Endothelial cell of umbilical vein (primary cell): ENCODE measurements at regions of chr3 and their contacts with region 1.

Region 1: DNA sequence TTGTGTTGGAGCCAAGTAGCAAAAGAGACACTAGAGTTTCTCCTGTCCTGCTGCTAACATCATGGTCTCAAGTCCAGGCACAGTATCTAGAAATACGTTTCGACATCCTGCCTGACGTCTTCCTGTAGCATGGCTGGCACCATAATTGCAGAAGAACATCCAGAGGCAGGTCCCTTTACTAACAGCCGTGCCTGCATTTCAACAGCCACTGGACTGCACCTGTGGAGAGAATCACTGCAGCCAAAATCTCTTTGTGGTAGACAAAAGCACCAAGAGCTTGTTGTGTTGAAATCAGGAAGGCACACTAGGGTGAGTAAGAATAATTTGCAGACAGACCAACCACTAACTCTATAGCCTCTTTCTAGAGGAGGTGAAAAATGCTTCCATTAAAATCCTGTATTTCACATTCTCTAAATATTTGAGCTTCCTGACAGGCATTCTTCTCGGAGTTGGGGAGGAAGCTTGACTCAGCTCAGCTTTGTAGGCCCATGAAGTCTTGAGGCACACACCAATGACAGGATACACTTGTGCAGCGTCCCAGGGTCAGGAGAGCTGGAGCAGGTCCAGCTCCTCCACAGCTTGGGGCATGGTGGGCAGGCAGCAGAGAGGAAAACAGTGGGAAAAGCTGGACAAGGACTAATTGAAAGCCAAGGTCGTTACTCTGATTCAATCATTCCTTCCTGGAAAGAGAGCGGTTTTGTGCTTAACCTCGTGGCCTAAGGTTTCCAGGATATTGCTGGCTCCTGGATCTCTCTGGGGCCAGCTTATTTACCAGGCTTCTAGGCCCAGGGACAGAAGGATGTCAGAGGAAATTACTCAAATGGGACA is 244.9 kb downstream of the FAM43A start:
- DNase-seq: peak; percentile 99
- H3K4me3 ChIP-seq: no peak overlapping the region
- H3K27ac ChIP-seq: peak overlapping the region; percentile 98
- H3K4me1 ChIP-seq: peaks cover 47% of the 10 kb centered on the region
- H3K27me3 ChIP-seq: no peaks in the 10 kb centered on the region
- CTCF ChIP-seq: no peak
- POLR2A ChIP-seq: peak; percentile 41

Region 2: GRCh38 chr3:193910886-193911738 is 1019.5 kb before region 1 on chr3:
- CTCF ChIA-PET with region 1: no interaction called
- POLR2A ChIA-PET with region 1: no interaction called
- dilution Hi-C with region 1: no loop called
- intact Hi-C with region 1: no loop called
- DNase-seq: no peak
- H3K4me3 ChIP-seq: no peak overlapping the region
- H3K27ac ChIP-seq: no peak overlapping the region
- H3K4me1 ChIP-seq: peaks cover 7% of the 10 kb centered on the region
- H3K27me3 ChIP-seq: no peaks in the 10 kb centered on the region
- CTCF ChIP-seq: no peak
- POLR2A ChIP-seq: no peak

Region 3: GRCh38 chr3:194711913-194712312 is 218.7 kb before region 1 on chr3:
- CTCF ChIA-PET with region 1: interaction called, 3 read pairs
- POLR2A ChIA-PET with region 1: no interaction called
- dilution Hi-C with region 1: no loop called
- intact Hi-C with region 1: loop called (anchors 1 kb)
- DNase-seq: peak; percentile 97
- H3K4me3 ChIP-seq: no peak overlapping the region
- H3K27ac ChIP-seq: peak overlapping the region; percentile 73
- H3K4me1 ChIP-seq: peaks cover 28% of the 10 kb centered on the region
- H3K27me3 ChIP-seq: no peaks in the 10 kb centered on the region
- CTCF ChIP-seq: no peak
- POLR2A ChIP-seq: no peak

Region 4: GRCh38 chr3:194849166-194849875 is 81.3 kb before region 1 on chr3:
- CTCF ChIA-PET with region 1: no interaction called
- POLR2A ChIA-PET with region 1: no interaction called
- dilution Hi-C with region 1: no loop called
- intact Hi-C with region 1: no loop called
- DNase-seq: no peak
- H3K4me3 ChIP-seq: no peak overlapping the region
- H3K27ac ChIP-seq: no peak overlapping the region
- H3K4me1 ChIP-seq: no peaks in the 10 kb centered on the region
- H3K27me3 ChIP-seq: no peaks in the 10 kb centered on the region
- CTCF ChIP-seq: no peak
- POLR2A ChIP-seq: no peak

Region 5: GRCh38 chr3:194871143-194871863 is 59.3 kb before region 1 on chr3:
- CTCF ChIA-PET with region 1: interaction called, 9 read pairs
- POLR2A ChIA-PET with region 1: interaction called, 5 read pairs
- dilution Hi-C with region 1: no loop called
- intact Hi-C with region 1: loop called (anchors 1 kb)
- DNase-seq: peak; percentile 71
- H3K4me3 ChIP-seq: no peak overlapping the region
- H3K27ac ChIP-seq: peak overlapping the region; percentile 73
- H3K4me1 ChIP-seq: peaks cover 50% of the 10 kb centered on the region
- H3K27me3 ChIP-seq: no peaks in the 10 kb centered on the region
- CTCF ChIP-seq: no peak
- POLR2A ChIP-seq: no peak

Region 6: DNA sequence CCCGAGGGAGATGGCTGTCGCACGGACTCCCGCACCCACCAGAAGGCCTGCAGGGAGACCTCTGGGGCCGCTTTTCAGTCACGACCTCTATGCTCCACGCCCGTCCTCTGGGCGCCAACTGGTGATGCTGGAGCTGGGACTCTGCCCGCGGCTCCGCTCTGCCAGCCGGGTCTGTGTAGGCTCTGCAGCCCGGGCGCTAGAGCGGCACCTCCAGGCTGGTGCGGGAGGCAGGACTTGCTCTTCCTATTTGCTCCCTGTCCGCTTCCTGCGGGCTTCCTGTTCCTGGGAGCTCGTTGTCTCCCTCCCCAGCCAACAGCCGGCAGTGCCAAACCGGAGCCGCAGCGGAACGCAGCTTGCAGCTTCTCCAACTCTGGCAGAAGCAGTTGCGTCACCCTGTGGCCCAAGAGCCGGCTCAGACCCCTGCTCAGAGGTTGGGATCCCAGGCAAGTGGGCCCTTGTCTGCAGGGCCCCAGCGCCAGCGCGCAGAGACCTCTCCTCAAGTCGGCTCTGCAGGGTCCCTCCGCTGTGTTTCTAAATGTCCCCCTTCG is 54.5 kb after region 1 on chr3:
- CTCF ChIA-PET with region 1: interaction called, 4 read pairs
- POLR2A ChIA-PET with region 1: no interaction called
- dilution Hi-C with region 1: no loop called
- intact Hi-C with region 1: loop called (anchors 2 kb)
- DNase-seq: no peak
- H3K4me3 ChIP-seq: no peak overlapping the region
- H3K27ac ChIP-seq: no peak overlapping the region
- H3K4me1 ChIP-seq: no peaks in the 10 kb centered on the region
- H3K27me3 ChIP-seq: no peaks in the 10 kb centered on the region
- CTCF ChIP-seq: no peak
- POLR2A ChIP-seq: no peak

Region 7: DNA sequence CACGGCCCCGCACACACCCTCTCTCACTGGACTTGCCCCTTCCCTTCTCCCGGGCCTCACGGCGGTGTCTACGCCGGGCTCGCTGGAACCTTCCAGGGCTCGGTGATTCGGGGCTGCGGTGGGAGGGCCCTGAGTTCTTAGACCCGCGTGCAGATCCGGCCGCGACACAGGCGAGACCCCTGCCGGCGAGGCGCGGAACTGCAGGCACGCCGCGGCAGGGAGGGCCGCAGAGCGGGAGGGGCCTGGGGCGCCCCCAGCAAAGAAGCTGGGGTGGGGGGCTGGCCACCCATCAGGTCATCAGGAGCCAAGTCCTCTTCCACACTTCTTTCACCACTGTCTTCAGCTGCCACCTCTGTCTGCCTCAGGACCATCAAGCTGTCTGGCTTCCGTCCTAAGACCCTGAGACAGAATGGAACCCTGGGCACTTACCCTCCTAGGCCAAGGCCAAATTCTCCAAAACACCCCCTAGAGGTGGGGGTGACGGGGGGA is 175.9 kb after region 1 on chr3:
- CTCF ChIA-PET with region 1: interaction called, 19 read pairs
- POLR2A ChIA-PET with region 1: no interaction called
- dilution Hi-C with region 1: no loop called
- intact Hi-C with region 1: loop called (anchors 1 kb)
- DNase-seq: peak; percentile 76
- H3K4me3 ChIP-seq: no peak overlapping the region
- H3K27ac ChIP-seq: peak overlapping the region; percentile 96
- H3K4me1 ChIP-seq: peaks cover 44% of the 10 kb centered on the region
- H3K27me3 ChIP-seq: no peaks in the 10 kb centered on the region
- CTCF ChIP-seq: peak; percentile 97 to 98
- POLR2A ChIP-seq: no peak